ENCODE measurements at regions of chr20 and their contacts with region 1.

Region 1: GRCh38 chr20:20083807-20084206 is 31.5 kb downstream of the CFAP61 start:
- DNase-seq: no peak
- H3K4me3 Mint-ChIP-seq: peak overlapping the region; percentile 54
- H3K27ac Mint-ChIP-seq: no peak overlapping the region
- H3K4me1 Mint-ChIP-seq: no peaks in the 10 kb centered on the region
- H3K27me3 Mint-ChIP-seq: peaks cover 14% of the 10 kb centered on the region

Region 2: DNA sequence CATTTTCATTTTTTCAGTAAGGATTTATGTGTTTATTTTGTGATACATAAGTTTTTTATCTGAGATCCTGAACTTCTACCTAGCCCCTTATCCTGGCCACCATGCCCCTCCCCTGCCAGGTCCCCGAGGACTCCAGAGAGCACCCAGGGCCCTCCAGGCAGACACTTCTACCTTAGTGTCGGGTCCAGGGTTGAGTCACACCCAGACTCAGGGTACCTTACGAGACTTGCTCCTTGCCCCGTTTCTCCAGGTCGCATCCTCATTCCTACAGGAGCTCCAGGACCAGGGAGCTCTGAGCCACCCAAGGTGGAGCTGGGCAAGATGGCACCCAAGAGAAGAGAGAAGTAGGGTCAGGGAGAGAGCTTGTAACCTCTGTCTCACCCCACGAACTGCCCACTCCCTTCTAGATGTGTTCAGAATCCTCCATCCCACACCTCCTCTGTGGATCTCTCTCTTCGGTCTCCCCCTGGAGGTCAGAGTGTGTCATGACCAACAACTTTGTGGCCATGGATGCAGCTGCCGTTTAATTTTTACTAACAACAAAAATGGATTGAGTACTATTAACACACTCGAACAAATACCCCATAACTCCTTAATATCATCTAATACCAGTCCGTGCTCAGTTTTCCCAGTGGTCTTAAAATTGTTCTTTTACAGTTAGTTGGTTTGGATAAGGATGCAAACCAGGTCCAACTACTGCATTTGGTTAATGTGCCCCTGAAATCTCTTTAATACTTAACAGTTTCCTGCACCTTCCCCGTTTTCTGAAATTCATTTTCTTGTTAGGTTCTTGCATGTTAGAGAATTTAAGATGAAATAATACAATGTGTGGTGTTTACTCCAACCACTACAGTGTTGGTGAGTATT is 153.5 kb after region 1 on chr20:
- intact Hi-C with region 1: loop called (anchors 1 kb)
- DNase-seq: no peak
- H3K4me3 Mint-ChIP-seq: no peak overlapping the region
- H3K27ac Mint-ChIP-seq: no peak overlapping the region
- H3K4me1 Mint-ChIP-seq: peaks cover 5% of the 10 kb centered on the region
- H3K27me3 Mint-ChIP-seq: peaks cover 13% of the 10 kb centered on the region

Region 3: GRCh38 chr20:20360464-20360863 is 276.7 kb after region 1 on chr20:
- intact Hi-C with region 1: loop called (anchors 5 kb)
- DNase-seq: no peak
- H3K4me3 Mint-ChIP-seq: no peak overlapping the region
- H3K27ac Mint-ChIP-seq: no peak overlapping the region
- H3K4me1 Mint-ChIP-seq: peaks cover 24% of the 10 kb centered on the region
- H3K27me3 Mint-ChIP-seq: peaks cover 53% of the 10 kb centered on the region

Measured in activated T-helper 1 cell treated with anti-CD3 and anti-CD28 coated beads, Interleukin-12 subunit alpha, Interleukin-12 subunit beta, Interleukin-2, Interleukin-4 antibody, amounts not matched to agents 30 ng/mL and 10 ng/mL and 1 ng/mL, durations not matched to agents 14 hours and 24 hours and 36 hours (primary cell).